ENCODE measurements at regions of chr9 and their contacts with region 1.

Region 1: GRCh38 chr9:6412487-6413364 is at the start of gene UHRF2:
- DNase-seq: peak; percentile 100
- H3K4me3 Mint-ChIP-seq: peak within 1 kb of the TSS; percentile 82
- H3K27ac Mint-ChIP-seq: peak within 1 kb of the TSS; percentile 95
- H3K4me1 Mint-ChIP-seq: peaks cover 29% of the 10 kb centered on the region
- H3K27me3 Mint-ChIP-seq: no peaks in the 10 kb centered on the region
- total RNA-seq, gene UHRF2: 62.7 to 71.5 TPM

Region 2: GRCh38 chr9:5336688-5337087 is 1076.0 kb before region 1 on chr9:
- CTCF ChIA-PET with region 1: no interaction called
- intact Hi-C with region 1: loop called (anchors 2 kb)
- DNase-seq: peak; percentile 42
- H3K4me3 Mint-ChIP-seq: peak overlapping the region; percentile 57
- H3K27ac Mint-ChIP-seq: no peak overlapping the region
- H3K4me1 Mint-ChIP-seq: peaks cover 39% of the 10 kb centered on the region
- H3K27me3 Mint-ChIP-seq: no peaks in the 10 kb centered on the region

Region 3: DNA sequence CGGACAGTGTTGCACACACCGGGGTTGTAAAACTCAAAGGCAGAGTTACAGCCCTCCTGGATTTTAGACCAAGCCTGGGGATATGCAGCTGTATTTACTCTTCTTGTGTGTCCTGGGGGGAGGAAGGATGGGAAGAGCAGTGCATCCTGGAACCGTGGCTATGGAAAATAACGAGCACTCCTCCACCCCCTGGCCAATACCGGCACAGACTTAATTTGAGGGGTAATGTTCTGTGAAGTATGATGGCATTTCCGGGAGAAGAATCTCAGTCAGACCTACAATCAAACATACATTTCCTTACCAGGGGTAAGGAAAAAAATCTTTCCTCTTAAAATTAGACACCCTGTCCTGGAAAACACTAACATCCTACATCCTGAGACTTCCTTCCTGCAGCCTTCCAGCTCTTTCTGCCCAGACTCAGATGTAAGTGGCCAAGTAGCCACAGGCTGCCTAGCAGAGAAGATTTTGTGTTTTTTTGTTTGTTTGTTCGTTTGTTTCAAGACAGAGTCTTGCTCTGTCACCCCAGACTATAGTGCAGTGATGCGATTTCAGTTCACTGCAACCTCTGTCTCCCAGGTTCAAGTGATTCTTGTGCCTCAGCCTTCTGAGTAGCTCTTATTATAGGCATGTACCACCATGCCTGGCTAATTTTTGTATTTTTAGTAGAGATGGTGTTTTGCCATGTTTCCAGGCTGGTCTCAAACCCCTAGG is 568.8 kb before region 1 on chr9:
- CTCF ChIA-PET with region 1: interaction called, 3 read pairs
- intact Hi-C with region 1: loop called (anchors 2 kb)
- DNase-seq: peak; percentile 39
- H3K4me3 Mint-ChIP-seq: peak overlapping the region; percentile 33
- H3K27ac Mint-ChIP-seq: peak overlapping the region; percentile 74
- H3K4me1 Mint-ChIP-seq: peaks cover 57% of the 10 kb centered on the region
- H3K27me3 Mint-ChIP-seq: no peaks in the 10 kb centered on the region

Region 4: GRCh38 chr9:6015278-6016157 is 397.2 kb before region 1 on chr9 and contains the start of gene RANBP6:
- CTCF ChIA-PET with region 1: no interaction called
- intact Hi-C with region 1: loop called (anchors 1 kb)
- DNase-seq: peak; percentile 95
- H3K4me3 Mint-ChIP-seq: peak within 1 kb of the TSS; percentile 98
- H3K27ac Mint-ChIP-seq: peak within 1 kb of the TSS; percentile 99
- H3K4me1 Mint-ChIP-seq: peaks cover 42% of the 10 kb centered on the region
- H3K27me3 Mint-ChIP-seq: no peaks in the 10 kb centered on the region
- total RNA-seq, gene RANBP6: 19.0 to 19.5 TPM

Region 5: GRCh38 chr9:6460189-6460768 is 47.6 kb after region 1 on chr9:
- CTCF ChIA-PET with region 1: no interaction called
- intact Hi-C with region 1: loop called (anchors 5 kb)
- DNase-seq: no peak
- H3K4me3 Mint-ChIP-seq: no peak overlapping the region
- H3K27ac Mint-ChIP-seq: no peak overlapping the region
- H3K4me1 Mint-ChIP-seq: peaks cover 23% of the 10 kb centered on the region
- H3K27me3 Mint-ChIP-seq: no peaks in the 10 kb centered on the region

Region 6: DNA sequence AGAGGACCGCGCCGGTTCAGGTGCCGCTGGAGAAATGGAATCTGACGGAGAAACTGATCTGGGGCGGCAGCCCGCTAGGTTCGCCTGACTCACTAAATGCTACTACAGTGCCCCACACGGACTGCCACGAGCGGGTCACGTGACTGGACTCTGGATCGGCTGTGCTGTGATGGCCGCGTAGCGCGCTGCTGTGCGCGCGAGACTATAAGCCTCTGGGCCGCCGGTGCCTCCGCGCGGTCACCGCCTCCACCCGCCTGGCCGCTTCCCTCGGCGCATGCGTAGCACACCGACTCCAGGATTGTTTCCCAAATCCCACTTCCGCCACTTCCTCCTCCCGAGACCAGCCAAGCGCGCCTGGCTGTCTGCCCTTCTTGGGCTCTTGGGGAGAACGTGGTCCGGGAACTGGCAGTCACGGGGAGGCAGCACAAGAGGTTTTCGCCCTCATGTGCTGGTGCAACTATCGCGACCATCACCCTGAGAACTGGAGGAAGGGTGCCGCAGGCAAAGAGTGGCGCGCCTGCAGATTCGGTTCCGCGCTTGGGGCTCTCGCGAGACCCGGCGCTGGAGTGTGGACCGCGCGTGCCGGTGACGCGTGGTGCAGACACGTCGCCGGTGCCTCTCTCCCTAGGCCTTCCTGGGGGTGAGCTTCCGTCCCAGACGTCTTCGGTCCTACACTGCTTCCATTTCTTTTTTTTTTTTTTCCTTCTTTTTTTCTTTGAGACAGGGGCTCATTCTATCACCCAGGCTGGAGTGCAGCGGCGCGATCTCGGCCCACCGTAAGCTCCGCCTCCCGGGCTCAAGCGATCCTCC is 268.6 kb after region 1 on chr9:
- CTCF ChIA-PET with region 1: no interaction called
- intact Hi-C with region 1: loop called (anchors 1 kb)
- DNase-seq: peak; percentile 94
- H3K4me3 Mint-ChIP-seq: peak overlapping the region; percentile 95
- H3K27ac Mint-ChIP-seq: peak overlapping the region; percentile 99
- H3K4me1 Mint-ChIP-seq: peaks cover 18% of the 10 kb centered on the region
- H3K27me3 Mint-ChIP-seq: no peaks in the 10 kb centered on the region

Region 7: GRCh38 chr9:6955251-6955921 is 542.7 kb after region 1 on chr9:
- CTCF ChIA-PET with region 1: no interaction called
- intact Hi-C with region 1: no loop called
- DNase-seq: peak; percentile 42
- H3K4me3 Mint-ChIP-seq: no peak overlapping the region
- H3K27ac Mint-ChIP-seq: peak overlapping the region; percentile 37
- H3K4me1 Mint-ChIP-seq: peaks cover 21% of the 10 kb centered on the region
- H3K27me3 Mint-ChIP-seq: no peaks in the 10 kb centered on the region

Measured in activated naive CD4-positive, alpha-beta T cell treated with anti-CD3 and anti-CD28 coated beads for 36 hours (primary cell).